Endothelial cell of umbilical vein (primary cell): ENCODE measurements at regions of chr1 and their contacts with region 1.

Region 1: DNA sequence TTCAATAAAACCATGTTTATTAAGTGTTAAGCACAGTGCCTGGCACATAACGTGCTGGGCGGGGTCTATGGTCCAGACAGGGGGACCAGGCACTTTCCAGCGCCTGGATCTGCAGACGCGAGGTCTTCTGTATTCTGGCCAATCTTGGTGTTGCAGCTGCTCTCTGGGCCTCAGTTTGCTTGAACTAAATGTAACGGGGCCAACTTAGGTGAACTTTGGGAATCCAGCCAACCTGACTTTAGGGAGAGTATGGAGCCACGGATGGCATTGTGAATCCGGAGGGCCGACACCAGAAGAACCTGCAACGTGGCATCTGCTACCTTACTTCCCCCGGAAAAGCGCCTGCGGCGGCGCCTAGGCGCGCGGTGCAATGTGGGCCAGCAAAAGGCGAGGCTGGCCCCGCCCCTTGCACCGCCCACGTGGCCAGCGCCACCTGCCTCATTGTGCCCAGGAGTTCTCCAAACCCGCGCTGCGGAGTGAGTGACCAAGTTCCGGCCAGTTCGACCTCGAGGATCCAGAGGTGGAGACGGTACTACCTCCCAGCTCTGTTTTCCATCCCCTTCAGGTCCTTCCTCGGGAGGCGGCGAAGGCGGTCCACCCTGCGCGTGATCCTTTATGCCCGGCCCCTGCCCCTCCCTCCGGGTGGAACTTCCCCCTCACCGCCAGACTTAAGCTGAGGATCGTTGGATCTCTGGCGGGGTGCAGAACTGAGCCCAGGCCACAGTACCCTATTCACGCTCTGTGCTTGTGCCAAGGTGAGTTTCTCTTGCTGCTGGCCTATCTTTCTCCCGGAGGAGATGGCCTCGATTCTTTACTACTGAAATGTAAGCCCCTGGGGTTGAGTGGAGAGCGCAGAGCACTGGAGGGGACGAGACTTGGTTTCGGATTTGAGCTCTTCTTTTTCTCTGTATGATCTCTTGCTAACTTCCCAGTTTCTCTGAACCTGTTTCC is at the start of gene AKR1A1:
- DNase-seq: peak; percentile 90
- H3K4me3 ChIP-seq: peak within 1 kb of the TSS; percentile 57 to 93 (median 80)
- H3K27ac ChIP-seq: peak within 1 kb of the TSS; percentile 49
- H3K4me1 ChIP-seq: peaks cover 13% of the 10 kb centered on the region
- H3K27me3 ChIP-seq: no peaks in the 10 kb centered on the region
- CTCF ChIP-seq: no peak
- POLR2A ChIP-seq: peak; percentile 96
- total RNA-seq, gene AKR1A1: 166 and 172 TPM in 2 replicates

Region 2: GRCh38 chr1:45499415-45499769 is 51.3 kb before region 1 on chr1:
- CTCF ChIA-PET with region 1: no interaction called
- POLR2A ChIA-PET with region 1: no interaction called
- dilution Hi-C with region 1: no loop called
- intact Hi-C with region 1: loop called (anchors 1 kb)
- DNase-seq: peak; percentile 12
- H3K4me3 ChIP-seq: peak overlapping the region; percentile 23 to 80 (median 54)
- H3K27ac ChIP-seq: no peak overlapping the region
- H3K4me1 ChIP-seq: peaks cover 11% of the 10 kb centered on the region
- H3K27me3 ChIP-seq: no peaks in the 10 kb centered on the region
- CTCF ChIP-seq: no peak
- POLR2A ChIP-seq: no peak

Region 3: DNA sequence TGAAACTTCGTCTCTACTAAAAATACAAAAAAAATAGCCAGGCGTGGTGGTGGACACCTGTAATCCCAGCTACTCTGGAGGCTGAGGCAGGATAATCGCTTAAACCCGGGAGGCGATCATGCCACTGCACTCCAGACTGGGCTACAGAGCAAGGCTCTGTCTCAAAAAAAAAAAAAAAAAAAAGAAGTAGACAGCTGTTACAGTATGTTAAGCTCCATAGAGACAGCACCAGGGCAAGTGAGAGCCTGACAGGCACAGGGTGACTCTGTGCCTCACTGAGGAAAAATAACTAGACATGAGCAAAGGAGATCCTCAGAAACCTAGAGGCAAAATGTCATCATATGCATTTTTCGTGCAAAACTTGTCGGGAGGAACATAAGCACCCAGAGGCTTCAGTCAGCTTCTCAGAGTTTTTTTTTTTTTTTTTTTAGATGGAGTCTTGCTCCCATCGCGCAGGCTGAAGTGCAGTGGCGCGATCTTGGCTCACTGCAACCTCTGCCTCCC is 20.0 kb before region 1 on chr1:
- CTCF ChIA-PET with region 1: interaction called, 4 read pairs
- POLR2A ChIA-PET with region 1: interaction called, 10 read pairs
- dilution Hi-C with region 1: no loop called
- intact Hi-C with region 1: no loop called
- DNase-seq: no peak
- H3K4me3 ChIP-seq: no peak overlapping the region
- H3K27ac ChIP-seq: no peak overlapping the region
- H3K4me1 ChIP-seq: no peaks in the 10 kb centered on the region
- H3K27me3 ChIP-seq: no peaks in the 10 kb centered on the region
- CTCF ChIP-seq: no peak
- POLR2A ChIP-seq: no peak

Region 4: DNA sequence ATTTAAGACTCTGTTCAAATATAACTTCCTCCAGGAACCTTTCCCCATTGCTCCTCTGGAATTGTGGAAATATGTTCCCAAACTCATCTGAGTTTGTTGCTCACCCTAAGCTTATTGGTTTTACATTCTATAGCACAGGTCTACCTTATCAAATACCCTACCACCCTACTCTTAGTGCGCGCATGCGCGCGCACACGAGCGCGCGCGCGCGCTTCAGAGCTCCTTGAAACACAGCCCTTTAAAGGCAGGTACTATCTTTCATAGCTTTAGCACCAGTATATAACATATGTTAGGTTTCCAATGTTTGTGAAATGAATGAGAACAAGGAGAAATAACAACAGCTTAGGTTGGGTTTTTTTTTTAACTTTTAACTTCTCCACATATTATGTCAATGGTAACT is 196.2 kb after region 1 on chr1:
- CTCF ChIA-PET with region 1: no interaction called
- POLR2A ChIA-PET with region 1: no interaction called
- dilution Hi-C with region 1: no loop called
- intact Hi-C with region 1: no loop called
- DNase-seq: no peak
- H3K4me3 ChIP-seq: no peak overlapping the region
- H3K27ac ChIP-seq: no peak overlapping the region
- H3K4me1 ChIP-seq: peaks cover 8% of the 10 kb centered on the region
- H3K27me3 ChIP-seq: no peaks in the 10 kb centered on the region
- CTCF ChIP-seq: no peak
- POLR2A ChIP-seq: no peak